Calu3 (cell line): ENCODE measurements at regions of chr3 and their contacts with region 1.

Region 1: GRCh38 chr3:161069511-161070263 is 35.5 kb downstream of the B3GALNT1 start:
- DNase-seq: peak; percentile 31
- H3K4me3 Mint-ChIP-seq: no peak overlapping the region
- H3K27ac Mint-ChIP-seq: peak overlapping the region; percentile 14
- H3K4me1 Mint-ChIP-seq: peaks cover 14% of the 10 kb centered on the region
- H3K27me3 Mint-ChIP-seq: no peaks in the 10 kb centered on the region
- CTCF ChIP-seq: no peak

Region 2: GRCh38 chr3:160999276-160999675 is 70.4 kb before region 1 on chr3:
- CTCF ChIA-PET with region 1: no interaction called
- intact Hi-C with region 1: loop called (anchors 5 kb)
- DNase-seq: peak; percentile 70
- H3K4me3 Mint-ChIP-seq: no peak overlapping the region
- H3K27ac Mint-ChIP-seq: no peak overlapping the region
- H3K4me1 Mint-ChIP-seq: peaks cover 19% of the 10 kb centered on the region
- H3K27me3 Mint-ChIP-seq: no peaks in the 10 kb centered on the region
- CTCF ChIP-seq: peak; percentile 64

Region 3: GRCh38 chr3:161082063-161082462 is 12.4 kb after region 1 on chr3:
- CTCF ChIA-PET with region 1: no interaction called
- intact Hi-C with region 1: loop called (anchors 1 kb)
- DNase-seq: no peak
- H3K4me3 Mint-ChIP-seq: no peak overlapping the region
- H3K27ac Mint-ChIP-seq: no peak overlapping the region
- H3K4me1 Mint-ChIP-seq: no peaks in the 10 kb centered on the region
- H3K27me3 Mint-ChIP-seq: no peaks in the 10 kb centered on the region
- CTCF ChIP-seq: no peak